Caco-2 (cell line): ENCODE measurements at regions of chrX and their contacts with region 1.

Region 1: GRCh38 chrX:56876286-56876685 is 119.1 kb downstream of the SPIN3 start:
- DNase-seq: no peak
- H3K4me3 ChIP-seq: no peak overlapping the region
- H3K4me3 Mint-ChIP-seq: no peak overlapping the region
- H3K27ac Mint-ChIP-seq: no peak overlapping the region
- H3K4me1 ChIP-seq: no peaks in the 10 kb centered on the region
- H3K4me1 Mint-ChIP-seq: peaks cover 6% of the 10 kb centered on the region
- H3K27me3 ChIP-seq: no peaks in the 10 kb centered on the region
- H3K27me3 Mint-ChIP-seq: no peaks in the 10 kb centered on the region
- CTCF ChIP-seq: no peak

Region 2: DNA sequence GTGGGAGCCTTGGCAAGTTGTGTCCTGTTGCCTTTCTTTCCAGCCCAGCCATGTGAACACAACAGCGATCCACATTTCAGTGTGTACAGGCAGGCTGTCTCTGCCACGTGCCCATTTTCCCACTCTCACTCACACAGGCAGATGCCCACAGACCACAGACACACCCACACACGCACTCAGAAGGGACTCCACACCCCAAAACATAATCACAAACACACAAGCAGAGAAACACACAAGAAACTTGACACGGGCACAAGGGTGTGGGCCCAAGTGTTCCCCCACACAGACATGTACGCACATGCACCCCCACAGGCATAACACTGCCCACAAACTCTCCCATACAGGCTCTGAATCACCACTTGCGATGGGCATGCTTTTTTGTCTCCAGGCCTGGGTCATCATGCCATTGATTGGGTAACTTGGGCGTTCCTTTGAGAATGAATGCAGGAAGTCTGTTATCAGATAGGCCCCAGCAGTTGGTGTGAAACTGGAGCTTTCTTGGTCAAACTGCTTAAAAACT is 62.9 kb before region 1 on chrX:
- CTCF ChIA-PET with region 1: no interaction called
- POLR2A ChIA-PET with region 1: no interaction called
- intact Hi-C with region 1: no loop called
- DNase-seq: no peak
- H3K4me3 ChIP-seq: no peak overlapping the region
- H3K4me3 Mint-ChIP-seq: no peak overlapping the region
- H3K27ac Mint-ChIP-seq: no peak overlapping the region
- H3K4me1 ChIP-seq: no peaks in the 10 kb centered on the region
- H3K4me1 Mint-ChIP-seq: no peaks in the 10 kb centered on the region
- H3K27me3 ChIP-seq: no peaks in the 10 kb centered on the region
- H3K27me3 Mint-ChIP-seq: no peaks in the 10 kb centered on the region
- CTCF ChIP-seq: no peak

Region 3: GRCh38 chrX:56920338-56920997 is 44.2 kb after region 1 on chrX:
- CTCF ChIA-PET with region 1: interaction called, 12 read pairs
- POLR2A ChIA-PET with region 1: no interaction called
- intact Hi-C with region 1: no loop called
- DNase-seq: peak in 1 of 2 experiments; percentile 12
- H3K4me3 ChIP-seq: no peak overlapping the region
- H3K4me3 Mint-ChIP-seq: no peak overlapping the region
- H3K27ac Mint-ChIP-seq: no peak overlapping the region
- H3K4me1 ChIP-seq: no peaks in the 10 kb centered on the region
- H3K4me1 Mint-ChIP-seq: peaks cover 8% of the 10 kb centered on the region
- H3K27me3 ChIP-seq: no peaks in the 10 kb centered on the region
- H3K27me3 Mint-ChIP-seq: no peaks in the 10 kb centered on the region
- CTCF ChIP-seq: no peak

Region 4: DNA sequence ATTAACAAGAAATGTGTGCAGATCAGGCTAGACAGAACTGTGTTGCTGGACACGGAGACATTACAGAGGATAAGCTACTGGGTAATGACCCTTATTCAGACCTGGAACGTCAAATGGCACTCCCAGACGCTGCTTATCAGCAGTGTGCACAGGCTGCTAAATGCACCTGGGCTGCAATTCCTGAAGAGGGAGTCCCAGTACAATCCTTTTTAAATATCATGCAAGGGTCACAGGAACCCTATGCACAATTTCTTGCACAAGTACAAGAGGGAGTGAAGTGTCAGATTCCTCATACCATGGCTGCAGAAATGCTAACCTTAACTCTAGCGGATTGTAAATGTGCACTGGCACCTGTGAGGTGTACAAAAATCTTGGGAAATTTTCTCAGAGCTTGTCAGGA is 228.1 kb after region 1 on chrX:
- CTCF ChIA-PET with region 1: no interaction called
- POLR2A ChIA-PET with region 1: no interaction called
- intact Hi-C with region 1: no loop called
- DNase-seq: peak in 1 of 2 experiments; percentile 10
- H3K4me3 ChIP-seq: no peak overlapping the region
- H3K4me3 Mint-ChIP-seq: no peak overlapping the region
- H3K27ac Mint-ChIP-seq: no peak overlapping the region
- H3K4me1 ChIP-seq: no peaks in the 10 kb centered on the region
- H3K4me1 Mint-ChIP-seq: no peaks in the 10 kb centered on the region
- H3K27me3 ChIP-seq: no peaks in the 10 kb centered on the region
- H3K27me3 Mint-ChIP-seq: no peaks in the 10 kb centered on the region
- CTCF ChIP-seq: peak in 1 of 2 experiments; percentile 35